ENCODE measurements at regions of chr19 and their contacts with region 1.

Region 1: GRCh38 chr19:29671393-29672160 is 6.3 kb downstream of the PLEKHF1 start:
- DNase-seq: peak; percentile 72 to 91 (median 84)
- ATAC-seq: peak; percentile 50 to 71 (median 70)
- H3K4me3 ChIP-seq: peak overlapping the region; percentile 12 to 39
- H3K4me3 Mint-ChIP-seq: peak overlapping the region; percentile 58 to 89 (median 62)
- H3K27ac ChIP-seq: peak overlapping the region; percentile 97
- H3K27ac Mint-ChIP-seq: peak overlapping the region; percentile 95 to 97
- H3K4me1 ChIP-seq: peaks cover 70 to 100% of the 10 kb centered on the region in 2 experiments
- H3K4me1 Mint-ChIP-seq: peaks cover 82 to 96% (median 93%) of the 10 kb centered on the region in 3 donors
- H3K27me3 ChIP-seq: no peaks in the 10 kb centered on the region
- H3K27me3 Mint-ChIP-seq: no peaks in the 10 kb centered on the region

Region 2: DNA sequence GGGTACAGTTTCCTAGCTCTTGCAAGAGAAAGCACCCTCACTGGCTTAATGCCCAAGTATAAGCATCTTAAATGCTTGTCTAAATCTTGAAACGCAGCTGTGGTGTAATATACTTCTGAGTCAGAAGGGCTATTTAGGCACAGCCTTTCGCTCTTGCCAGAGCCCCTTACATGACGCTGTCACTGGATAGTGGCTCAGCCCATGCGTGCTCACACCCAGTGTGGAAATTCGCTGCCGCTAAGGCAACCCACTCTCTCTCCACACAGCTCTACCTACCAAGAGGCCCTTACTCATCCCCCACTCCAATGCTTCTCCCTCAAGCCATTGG is 482.6 kb before region 1 on chr19:
- CTCF ChIA-PET with region 1: no interaction called
- POLR2A ChIA-PET with region 1: no interaction called
- DNase-seq: no peak
- ATAC-seq: no peak
- H3K4me3 ChIP-seq: no peak overlapping the region
- H3K4me3 Mint-ChIP-seq: no peak overlapping the region
- H3K27ac ChIP-seq: no peak overlapping the region
- H3K27ac Mint-ChIP-seq: no peak overlapping the region
- H3K4me1 ChIP-seq: no peaks in the 10 kb centered on the region
- H3K4me1 Mint-ChIP-seq: peaks cover 4 to 7% (median 5%) of the 10 kb centered on the region in 3 donors
- H3K27me3 ChIP-seq: peaks cover 0 to 4% of the 10 kb centered on the region in 2 experiments
- H3K27me3 Mint-ChIP-seq: peaks cover 0 to 7% of the 10 kb centered on the region in 2 donors

Region 3: DNA sequence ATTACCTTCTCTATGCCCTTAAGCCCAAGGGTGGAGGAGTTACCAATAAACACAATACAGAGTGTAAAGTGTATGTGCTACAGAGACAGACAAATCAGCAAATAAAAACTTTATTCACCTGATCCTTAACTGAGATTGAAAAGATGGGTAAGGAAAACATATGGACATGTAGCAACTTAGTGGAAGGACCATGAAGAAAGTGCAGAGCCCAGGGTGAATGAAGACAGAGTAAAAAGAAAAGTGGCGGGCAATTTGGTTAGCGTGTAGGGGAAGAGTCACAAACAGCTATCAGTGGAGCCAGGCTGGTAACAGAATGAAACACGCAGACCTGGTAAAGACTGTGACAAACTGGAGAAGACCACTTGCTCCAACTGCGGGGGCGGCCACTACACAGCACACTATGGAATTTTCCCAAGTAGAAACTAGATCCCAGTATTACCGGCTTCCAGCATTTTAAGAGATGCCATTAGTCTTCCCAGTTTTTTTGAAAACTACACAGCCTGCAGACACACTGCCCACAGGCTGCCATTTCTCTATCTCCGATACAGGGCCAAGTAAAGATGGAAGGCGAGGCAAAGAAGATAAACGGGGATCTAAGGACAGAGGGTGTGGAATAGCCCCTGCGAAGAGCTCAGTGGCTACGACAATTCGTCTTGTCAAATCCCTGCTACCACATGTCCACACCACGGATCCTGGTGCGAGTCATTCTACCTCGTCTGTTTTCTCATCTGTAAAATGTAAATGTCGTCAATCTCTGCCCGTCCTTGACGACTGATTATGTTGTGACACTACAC is 459.8 kb before region 1 on chr19:
- CTCF ChIA-PET with region 1: no interaction called
- POLR2A ChIA-PET with region 1: interaction called in 1 of 2 experiments, 10 read pairs
- DNase-seq: peak in 4 of 35 experiments; percentile 4 to 32 (median 11)
- ATAC-seq: no peak
- H3K4me3 ChIP-seq: peak overlapping the region; percentile 60 to 89
- H3K4me3 Mint-ChIP-seq: peak overlapping the region; percentile 93 to 97 (median 95)
- H3K27ac ChIP-seq: peak overlapping the region; percentile 66
- H3K27ac Mint-ChIP-seq: peak overlapping the region; percentile 92 to 94
- H3K4me1 ChIP-seq: peaks cover 8 to 10% of the 10 kb centered on the region in 2 experiments
- H3K4me1 Mint-ChIP-seq: peaks cover 46 to 54% (median 52%) of the 10 kb centered on the region in 3 donors
- H3K27me3 ChIP-seq: no peaks in the 10 kb centered on the region
- H3K27me3 Mint-ChIP-seq: peaks cover 3 to 8% of the 10 kb centered on the region in 2 donors